Aorta (tissue), 5 donors: ENCODE measurements at regions of chr4 and their contacts with region 1.

Region 1: DNA sequence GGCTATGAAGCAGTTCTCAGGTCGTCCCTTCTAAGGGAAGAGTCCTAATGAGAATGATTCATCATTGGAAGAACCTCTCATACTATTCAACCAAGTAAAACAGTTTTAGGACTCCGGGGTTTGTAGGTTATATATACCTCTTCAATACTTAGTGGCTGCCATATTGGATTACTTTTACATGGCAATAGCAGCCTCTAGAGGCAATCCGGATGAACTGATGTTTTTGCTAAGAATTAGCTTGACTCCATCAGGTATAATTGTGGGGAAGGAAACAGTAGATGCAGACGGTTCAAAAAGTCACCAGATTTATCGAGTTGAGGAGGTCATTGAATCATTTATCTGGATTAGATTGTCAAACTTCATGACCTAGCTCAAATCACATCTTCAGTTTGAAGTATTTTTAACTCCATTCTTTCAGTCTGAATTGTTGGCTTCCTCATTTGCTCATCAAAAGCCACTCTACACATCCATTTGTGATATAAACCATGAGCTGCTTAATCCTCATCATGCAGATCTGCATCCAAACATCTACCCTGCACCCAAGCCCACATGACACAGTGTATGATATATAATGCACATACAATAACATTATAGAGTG is 28.4 kb downstream of the GUCY1B1 start:
- DNase-seq: no peak
- ATAC-seq: peak; percentile 83
- H3K4me3 ChIP-seq: no peak overlapping the region
- H3K27ac ChIP-seq: no peak overlapping the region
- H3K4me1 ChIP-seq: no peaks in the 10 kb centered on the region
- H3K27me3 ChIP-seq: no peaks in the 10 kb centered on the region

Region 2: DNA sequence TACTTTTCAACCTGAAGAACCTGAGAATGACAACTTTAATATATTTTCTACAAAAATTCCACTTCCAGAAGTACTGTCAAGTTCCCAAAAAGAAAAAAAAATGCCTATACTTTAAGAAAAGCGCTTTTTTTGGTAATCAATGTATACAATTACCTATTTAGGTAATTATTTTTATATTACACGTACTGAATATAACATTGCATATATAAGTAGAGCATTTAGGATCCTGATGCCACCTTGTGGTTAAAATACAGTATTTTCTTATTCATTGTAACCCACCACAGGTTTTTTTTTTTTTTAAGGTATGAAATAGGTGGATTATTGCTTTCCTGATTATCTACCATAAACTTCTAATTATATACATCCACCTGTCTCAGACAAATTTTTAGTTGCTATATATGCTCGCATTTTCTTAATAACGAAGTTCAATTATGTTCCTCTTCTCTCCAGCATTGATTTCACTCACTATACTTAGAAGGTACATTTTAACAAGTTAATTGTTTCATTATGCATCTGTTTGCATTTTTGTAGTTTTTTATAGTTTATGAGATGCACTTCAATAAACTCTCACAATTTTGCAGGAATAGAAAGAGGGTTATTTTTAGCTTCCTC is 415.7 kb before region 1 on chr4:
- intact Hi-C with region 1: no loop called
- DNase-seq: no peak
- ATAC-seq: no peak
- H3K4me3 ChIP-seq: no peak overlapping the region
- H3K27ac ChIP-seq: no peak overlapping the region
- H3K4me1 ChIP-seq: no peaks in the 10 kb centered on the region
- H3K27me3 ChIP-seq: no peaks in the 10 kb centered on the region

Region 3: GRCh38 chr4:155693015-155693663 is 94.1 kb before region 1 on chr4:
- intact Hi-C with region 1: loop called in 1 of 2 experiments (anchors 10 kb)
- DNase-seq: no peak
- ATAC-seq: no peak
- H3K4me3 ChIP-seq: no peak overlapping the region
- H3K27ac ChIP-seq: no peak overlapping the region
- H3K4me1 ChIP-seq: peaks cover 2 to 4% of the 10 kb centered on the region in 2 donors
- H3K27me3 ChIP-seq: no peaks in the 10 kb centered on the region

Region 4: DNA sequence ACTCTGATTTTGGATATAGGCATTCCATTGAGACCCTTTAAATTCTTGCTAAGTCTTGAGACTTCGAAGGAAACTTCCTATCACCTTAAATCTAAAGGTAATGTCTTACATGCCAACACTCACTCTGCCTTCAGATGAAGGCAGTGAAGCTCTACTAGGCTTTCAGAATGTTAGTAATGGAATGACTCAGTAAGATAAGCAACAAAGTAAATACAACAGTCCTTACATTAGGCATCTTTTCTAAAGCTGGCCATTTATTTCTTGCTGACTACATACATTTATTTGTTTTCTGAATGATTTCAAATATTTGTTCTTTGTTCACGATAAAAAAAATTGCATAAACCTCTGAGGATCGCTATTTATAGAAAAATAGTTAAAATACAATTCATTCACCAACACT is 35.4 kb after region 1 on chr4:
- intact Hi-C with region 1: no loop called
- DNase-seq: no peak
- ATAC-seq: no peak
- H3K4me3 ChIP-seq: no peak overlapping the region
- H3K27ac ChIP-seq: no peak overlapping the region
- H3K4me1 ChIP-seq: no peaks in the 10 kb centered on the region
- H3K27me3 ChIP-seq: no peaks in the 10 kb centered on the region